OCI-LY7 (cell line): ENCODE measurements at regions of chr9 and their contacts with region 1.

Region 1: DNA sequence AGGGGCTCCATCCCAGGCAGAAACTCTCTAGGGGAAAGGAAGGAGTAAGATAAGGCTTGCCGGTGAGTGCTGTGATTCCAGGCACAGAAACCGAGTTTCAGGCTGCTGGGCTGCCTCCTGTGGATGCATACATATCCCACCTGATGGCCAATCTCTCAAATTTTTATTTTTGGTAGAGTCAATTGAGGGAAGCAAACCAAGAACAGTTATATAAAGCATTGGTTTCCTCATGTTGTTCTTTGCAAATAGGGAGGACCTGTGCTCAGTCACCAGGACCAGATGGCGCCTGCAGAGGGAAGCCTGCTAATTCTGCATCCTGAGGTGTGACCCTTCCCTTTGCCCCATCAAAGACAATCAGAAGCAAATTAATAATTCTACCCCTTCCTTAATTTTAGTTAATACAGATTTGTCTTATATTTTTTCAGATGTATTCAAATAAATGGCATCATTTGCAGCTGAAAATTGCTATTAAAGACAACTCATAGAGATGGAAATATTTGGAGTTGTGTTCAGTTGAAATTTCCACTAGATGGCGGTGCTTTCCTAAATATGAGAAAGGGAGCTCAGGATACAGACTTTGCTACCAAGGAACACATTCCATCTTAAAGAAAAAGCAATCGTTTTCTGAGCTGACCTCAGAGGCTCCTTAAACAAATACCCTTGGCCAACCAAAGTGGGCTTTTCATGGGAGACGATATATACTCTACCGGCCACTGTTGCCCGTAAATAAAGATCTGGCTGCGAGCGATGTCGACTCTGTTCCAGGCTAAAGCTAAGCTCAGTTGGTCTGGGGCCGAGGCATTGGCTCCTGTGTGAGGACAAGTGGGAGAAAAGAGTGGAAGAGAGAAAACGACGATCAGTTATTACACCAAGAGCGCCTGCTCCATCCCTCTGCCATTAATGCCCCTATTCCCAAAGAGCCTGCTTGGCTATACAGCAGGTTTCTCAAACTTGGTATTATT is 225.7 kb upstream of the KLF9 start:
- DNase-seq: peak; percentile 36
- H3K4me3 ChIP-seq: no peak overlapping the region
- H3K27ac ChIP-seq: no peak overlapping the region
- H3K4me1 ChIP-seq: no peaks in the 10 kb centered on the region
- CTCF ChIP-seq: peak; percentile 84

Region 2: DNA sequence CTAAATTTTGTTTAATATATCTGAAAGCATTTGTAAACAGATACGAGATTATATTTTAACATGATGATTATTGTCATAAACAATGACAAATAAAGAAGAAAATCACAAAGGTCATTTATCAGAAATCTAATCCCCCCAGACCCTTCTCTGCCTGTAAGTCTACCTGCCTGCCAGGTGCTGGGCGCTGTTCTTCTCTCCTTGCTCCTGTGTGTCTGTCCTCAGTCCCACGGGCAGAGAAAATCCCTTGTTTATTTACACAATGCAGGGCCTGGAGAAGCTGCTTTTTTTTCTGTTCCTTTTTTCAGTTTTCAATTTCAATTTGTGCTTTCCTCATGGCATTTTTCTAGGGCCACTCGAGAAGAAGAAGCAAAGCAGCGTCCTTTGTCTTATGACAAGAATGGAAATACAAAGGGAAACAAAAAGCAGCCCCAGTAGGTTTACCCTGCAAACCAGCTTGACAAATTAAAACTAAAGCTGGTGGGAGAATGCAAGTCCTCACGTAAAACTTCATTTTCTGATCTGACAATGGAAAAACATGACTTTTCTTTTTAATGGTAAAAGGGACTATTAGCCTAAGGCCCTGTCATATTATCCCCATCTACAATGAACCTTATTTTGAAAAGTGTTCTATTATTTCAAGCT is 56.7 kb after region 1 on chr9:
- CTCF ChIA-PET with region 1: no interaction called
- POLR2A ChIA-PET with region 1: no interaction called
- intact Hi-C with region 1: no loop called
- DNase-seq: no peak
- H3K4me3 ChIP-seq: no peak overlapping the region
- H3K27ac ChIP-seq: no peak overlapping the region
- H3K4me1 ChIP-seq: no peaks in the 10 kb centered on the region
- CTCF ChIP-seq: no peak

Region 3: DNA sequence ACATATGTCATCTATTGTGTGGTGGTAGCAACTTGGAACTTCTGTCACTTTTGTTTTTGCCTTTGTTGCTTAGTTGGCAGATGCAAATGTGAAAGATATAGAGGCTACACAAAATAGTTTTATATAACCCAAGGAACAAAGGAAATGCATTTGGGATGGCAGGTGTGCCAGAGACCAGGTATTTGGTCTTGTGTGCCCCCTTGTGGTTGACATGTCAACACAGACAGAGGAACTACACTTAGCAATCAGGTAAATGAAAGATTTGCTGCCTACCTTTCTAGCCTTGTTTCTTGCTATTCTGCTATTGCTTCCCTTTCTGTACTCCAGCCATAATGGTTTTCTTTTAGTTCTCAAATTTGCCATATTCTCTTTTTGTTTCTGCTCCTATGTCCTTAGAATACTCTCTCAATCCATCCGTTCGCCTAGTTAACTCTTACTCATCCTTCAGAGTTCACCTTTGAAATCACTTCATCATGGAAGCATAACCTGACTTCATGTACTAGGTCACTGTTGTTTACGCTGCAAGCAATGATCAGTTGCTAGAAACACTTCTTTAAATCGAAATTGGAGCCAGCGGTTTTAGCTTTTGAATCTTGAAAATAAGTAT is 361.7 kb after region 1 on chr9:
- CTCF ChIA-PET with region 1: no interaction called
- POLR2A ChIA-PET with region 1: no interaction called
- intact Hi-C with region 1: loop called (anchors 2 kb)
- DNase-seq: peak; percentile 35
- H3K4me3 ChIP-seq: no peak overlapping the region
- H3K27ac ChIP-seq: no peak overlapping the region
- H3K4me1 ChIP-seq: no peaks in the 10 kb centered on the region
- CTCF ChIP-seq: peak; percentile 79

Region 4: DNA sequence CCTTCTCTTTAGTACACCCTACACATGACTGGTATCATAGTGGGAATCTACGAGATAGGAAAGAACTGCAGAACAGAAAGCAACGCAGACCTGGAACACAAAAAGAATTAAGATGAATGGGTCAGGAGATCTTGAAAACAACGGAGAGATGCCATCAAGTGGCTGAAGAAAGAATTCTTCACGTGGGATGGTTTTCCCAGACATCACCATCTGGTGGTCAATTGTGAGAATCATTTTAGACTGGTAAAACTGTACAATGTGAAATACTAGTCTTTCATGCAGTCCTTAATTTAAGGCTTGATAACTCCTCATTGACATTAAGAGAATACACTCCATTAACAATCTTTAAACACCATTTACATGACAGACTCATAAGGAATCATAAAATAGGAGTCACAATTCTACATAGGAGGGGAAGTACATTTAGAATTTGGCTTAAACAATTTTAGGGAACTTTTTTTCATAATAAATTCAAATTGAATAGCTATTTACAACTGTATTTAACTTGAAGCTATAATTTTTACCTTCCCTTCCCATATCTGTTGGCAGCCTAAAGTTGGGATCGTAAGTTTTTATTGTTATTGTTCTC is 609.7 kb after region 1 on chr9:
- CTCF ChIA-PET with region 1: no interaction called
- POLR2A ChIA-PET with region 1: no interaction called
- intact Hi-C with region 1: loop called (anchors 2 kb)
- DNase-seq: peak; percentile 48
- H3K4me3 ChIP-seq: no peak overlapping the region
- H3K27ac ChIP-seq: no peak overlapping the region
- H3K4me1 ChIP-seq: no peaks in the 10 kb centered on the region
- CTCF ChIP-seq: peak; percentile 87